Sigmoid colon (tissue), 7 donors: ENCODE measurements at regions of chr5 and their contacts with region 1.

Region 1: GRCh38 chr5:81971712-81972495 is at the start of gene ATG10:
- DNase-seq: peak; percentile 96
- H3K4me3 ChIP-seq: peak within 1 kb of the TSS; percentile 69 to 87 (median 70)
- H3K27ac ChIP-seq: peak within 1 kb of the TSS; percentile 95 to 99 (median 98)
- H3K4me1 ChIP-seq: peaks cover 0 to 19% (median 6%) of the 10 kb centered on the region in 4 donors
- H3K27me3 ChIP-seq: no peaks in the 10 kb centered on the region
- CTCF ChIP-seq: no peak
- EP300 ChIP-seq: no peak
- POLR2A ChIP-seq: peak; percentile 88 to 93
- total RNA-seq, gene ATG10: 6.4 to 13.2 (median 10.7) TPM

Region 2: GRCh38 chr5:81420039-81420667 is 551.8 kb before region 1 on chr5:
- intact Hi-C with region 1: loop called (anchors 5 kb)
- DNase-seq: no peak
- H3K4me3 ChIP-seq: no peak overlapping the region
- H3K27ac ChIP-seq: peak overlapping the region in 1 of 4 donors; percentile 38
- H3K4me1 ChIP-seq: peaks cover 0 to 27% (median 15%) of the 10 kb centered on the region in 4 donors
- H3K27me3 ChIP-seq: no peaks in the 10 kb centered on the region
- CTCF ChIP-seq: no peak
- EP300 ChIP-seq: no peak
- POLR2A ChIP-seq: no peak